ENCODE measurements at regions of chr10 and their contacts with region 1.

Region 1: DNA sequence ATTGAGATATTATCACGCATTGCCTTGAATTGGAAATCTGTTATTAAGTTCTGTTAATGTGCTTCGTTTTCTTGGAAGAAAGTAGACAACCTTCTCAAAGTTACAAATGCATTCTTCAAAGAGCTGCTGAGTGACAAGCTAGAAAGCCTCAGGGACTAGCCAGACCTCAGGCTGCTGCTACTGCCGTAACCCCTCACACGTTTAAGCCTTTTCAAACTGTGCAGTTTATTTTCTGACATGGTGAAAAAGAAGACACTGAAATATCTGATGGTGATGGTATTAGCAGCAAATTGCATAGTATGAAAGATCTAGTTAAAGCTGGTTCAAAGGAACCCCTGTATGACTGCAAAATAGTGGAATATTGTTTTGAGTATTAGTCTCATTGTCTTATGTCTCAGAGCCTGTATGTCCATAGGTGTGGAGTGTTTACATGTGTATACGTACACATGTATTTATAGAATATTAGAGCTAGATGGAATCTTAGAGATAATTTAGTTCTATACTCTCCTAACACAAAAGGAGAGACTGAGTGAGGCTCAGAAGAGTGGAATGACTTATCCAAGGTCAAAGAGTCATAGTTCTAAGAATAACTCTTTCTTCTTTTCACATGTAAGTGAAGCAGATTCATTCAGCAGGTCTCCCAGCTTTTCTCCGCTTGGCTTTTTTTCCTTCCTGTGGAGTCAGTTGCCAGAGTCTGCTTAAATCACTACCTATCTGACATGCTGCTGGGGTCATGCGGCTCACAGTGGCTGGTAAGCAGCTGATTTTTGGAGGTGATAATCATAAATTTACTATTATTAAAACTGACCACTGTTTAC is 431.9 kb downstream of the PLXDC2 start:
- DNase-seq: no peak
- H3K4me3 ChIP-seq: no peak overlapping the region
- CTCF ChIP-seq: no peak
- POLR2A ChIP-seq: no peak

Region 2: DNA sequence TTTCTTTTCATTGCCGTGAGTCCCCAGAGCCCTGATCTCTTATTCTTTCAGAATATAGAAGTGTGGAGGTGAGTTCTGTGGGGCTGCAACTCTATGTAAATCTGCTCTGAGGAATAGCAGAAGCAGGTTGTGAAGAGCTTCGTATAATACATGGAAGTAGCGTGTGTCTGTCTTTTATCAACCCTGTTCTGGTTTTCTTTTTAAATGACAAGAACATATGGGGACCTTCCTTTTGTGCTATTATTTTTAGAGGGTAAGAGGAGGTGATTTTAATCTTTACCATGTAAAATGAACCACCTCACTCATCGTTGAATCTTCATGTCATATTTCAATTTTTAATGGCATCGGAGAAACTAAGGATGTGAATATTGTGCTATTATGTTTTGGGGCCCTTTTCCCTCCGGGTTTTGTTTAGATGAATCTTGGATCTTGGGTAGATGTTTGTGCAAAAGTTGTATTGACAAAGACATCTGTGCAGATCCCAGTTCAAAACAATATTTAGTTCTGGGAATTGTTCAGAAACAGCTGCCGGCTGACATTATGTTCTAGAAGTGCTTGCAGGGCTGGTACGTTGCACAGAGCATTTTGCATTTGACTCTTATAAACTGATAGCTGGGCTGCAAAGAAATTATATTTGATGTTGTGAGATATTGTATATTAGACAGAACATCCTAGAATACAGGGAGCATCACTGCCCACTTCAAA is 385.1 kb before region 1 on chr10:
- intact Hi-C with region 1: no loop called
- DNase-seq: no peak
- H3K4me3 ChIP-seq: no peak overlapping the region
- CTCF ChIP-seq: no peak
- POLR2A ChIP-seq: no peak

Region 3: DNA sequence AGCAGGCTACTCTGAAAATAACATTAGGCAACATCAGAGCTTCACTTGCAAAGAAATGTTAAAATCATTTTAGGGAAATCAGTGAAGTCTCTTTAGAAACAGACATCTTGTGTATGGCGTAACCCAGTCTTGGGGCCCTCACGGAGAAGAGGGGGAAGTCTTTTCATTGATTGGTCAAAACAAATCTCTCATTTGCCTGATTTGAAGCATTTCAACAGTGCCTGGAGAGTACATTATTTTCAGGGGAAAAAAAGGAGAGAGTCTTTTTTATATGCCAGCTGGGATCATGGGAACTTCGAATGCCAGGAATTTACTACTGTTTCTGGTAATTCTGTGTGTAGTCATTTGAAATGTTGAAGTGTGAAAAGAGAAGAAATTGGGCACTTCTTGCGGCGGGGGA is 39.5 kb after region 1 on chr10:
- intact Hi-C with region 1: loop called (anchors 2 kb)
- DNase-seq: no peak
- H3K4me3 ChIP-seq: no peak overlapping the region
- CTCF ChIP-seq: no peak
- POLR2A ChIP-seq: no peak